ENCODE measurements at regions of chr7 and their contacts with region 1.

Region 1: DNA sequence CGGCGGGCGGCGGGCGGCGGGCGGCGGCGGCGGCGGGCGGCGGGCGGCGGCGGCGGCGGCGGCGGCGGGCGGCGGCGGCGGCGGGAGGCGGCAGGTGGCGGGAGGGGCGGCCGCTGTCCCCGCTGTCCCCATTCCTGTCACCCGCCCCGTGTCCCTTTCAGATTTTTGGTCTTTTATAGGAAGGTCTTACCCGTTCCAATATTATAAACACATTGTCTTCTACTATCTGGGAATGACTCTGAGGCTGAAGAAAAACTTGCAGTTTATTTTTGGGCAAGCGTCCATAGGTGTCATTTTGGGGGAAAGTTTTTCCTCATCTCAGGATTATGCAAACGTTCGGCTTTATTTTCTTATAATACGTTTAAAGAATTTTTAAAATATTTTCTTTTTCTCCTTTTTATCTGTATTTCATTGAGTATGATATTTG is 578 bp downstream of the ZNF713 start:
- DNase-seq: peak in 1 of 14 experiments; percentile 1
- ATAC-seq: peak; percentile 12
- H3K4me3 ChIP-seq: peak overlapping the region; percentile 60
- H3K4me3 Mint-ChIP-seq: peak overlapping the region; percentile 90
- H3K27ac ChIP-seq: no peak overlapping the region
- H3K27ac Mint-ChIP-seq: peak overlapping the region; percentile 90
- H3K4me1 ChIP-seq: peaks cover 13% of the 10 kb centered on the region
- H3K4me1 Mint-ChIP-seq: peaks cover 6% of the 10 kb centered on the region
- H3K27me3 ChIP-seq: no peaks in the 10 kb centered on the region
- H3K27me3 Mint-ChIP-seq: no peaks in the 10 kb centered on the region
- CTCF ChIP-seq: no peak

Region 2: DNA sequence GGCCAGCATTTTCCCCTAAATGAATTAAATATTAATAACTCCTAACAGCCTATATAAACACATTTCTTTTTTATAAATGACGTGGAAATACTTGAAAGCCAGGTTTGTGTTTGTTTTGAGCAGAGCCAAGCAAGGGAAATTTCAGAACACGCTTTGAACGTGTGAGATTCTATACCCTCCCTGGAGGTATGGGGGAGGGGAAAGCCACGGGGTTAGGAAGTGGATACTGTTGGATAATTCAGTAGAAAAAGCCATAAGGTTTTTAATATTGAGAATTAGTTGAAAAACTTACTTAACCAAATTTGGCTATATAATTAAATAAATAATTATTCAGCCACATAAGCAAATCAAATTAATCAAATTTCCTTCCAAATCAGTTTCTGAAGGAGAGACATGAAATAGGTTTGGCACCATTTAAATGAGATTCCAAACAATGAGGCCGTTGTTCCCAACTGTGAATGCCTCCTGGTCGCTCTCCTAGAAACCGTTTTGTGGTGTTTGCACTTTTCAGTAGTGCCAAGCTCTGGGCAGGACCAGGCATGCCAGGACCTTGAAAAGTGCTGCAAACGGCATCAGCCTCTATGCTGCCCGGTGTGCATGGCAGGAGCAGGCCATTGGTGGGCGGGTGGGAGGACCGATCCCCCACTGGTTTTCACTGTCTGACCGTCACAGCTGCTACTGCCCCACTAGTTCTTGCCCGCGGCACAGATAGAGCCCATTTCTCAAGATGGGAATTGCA is 113.3 kb before region 1 on chr7:
- CTCF ChIA-PET with region 1: no interaction called
- POLR2A ChIA-PET with region 1: no interaction called
- intact Hi-C with region 1: loop called in 1 of 2 experiments (anchors 10 kb)
- DNase-seq: no peak
- ATAC-seq: no peak
- H3K4me3 ChIP-seq: no peak overlapping the region
- H3K4me3 Mint-ChIP-seq: no peak overlapping the region
- H3K27ac ChIP-seq: no peak overlapping the region
- H3K27ac Mint-ChIP-seq: no peak overlapping the region
- H3K4me1 ChIP-seq: no peaks in the 10 kb centered on the region
- H3K4me1 Mint-ChIP-seq: no peaks in the 10 kb centered on the region
- H3K27me3 ChIP-seq: no peaks in the 10 kb centered on the region
- H3K27me3 Mint-ChIP-seq: no peaks in the 10 kb centered on the region
- CTCF ChIP-seq: no peak

Region 3: GRCh38 chr7:55912748-55913158 is 24.9 kb after region 1 on chr7:
- CTCF ChIA-PET with region 1: no interaction called
- POLR2A ChIA-PET with region 1: no interaction called
- intact Hi-C with region 1: no loop called
- DNase-seq: no peak
- ATAC-seq: no peak
- H3K4me3 ChIP-seq: no peak overlapping the region
- H3K4me3 Mint-ChIP-seq: no peak overlapping the region
- H3K27ac ChIP-seq: no peak overlapping the region
- H3K27ac Mint-ChIP-seq: no peak overlapping the region
- H3K4me1 ChIP-seq: no peaks in the 10 kb centered on the region
- H3K4me1 Mint-ChIP-seq: no peaks in the 10 kb centered on the region
- H3K27me3 ChIP-seq: no peaks in the 10 kb centered on the region
- H3K27me3 Mint-ChIP-seq: no peaks in the 10 kb centered on the region
- CTCF ChIP-seq: no peak

Region 4: GRCh38 chr7:55951637-55952351 is 64.0 kb after region 1 on chr7 and contains the start of gene MRPS17:
- CTCF ChIA-PET with region 1: no interaction called
- POLR2A ChIA-PET with region 1: no interaction called
- intact Hi-C with region 1: loop called (anchors 1 to 2 kb)
- DNase-seq: peak; percentile 82 to 97 (median 91)
- ATAC-seq: peak; percentile 99
- H3K4me3 ChIP-seq: peak within 1 kb of the TSS; percentile 96
- H3K4me3 Mint-ChIP-seq: peak within 1 kb of the TSS; percentile 94
- H3K27ac ChIP-seq: peak within 1 kb of the TSS; percentile 76 to 89
- H3K27ac Mint-ChIP-seq: peak within 1 kb of the TSS; percentile 92
- H3K4me1 ChIP-seq: peaks cover 13% of the 10 kb centered on the region
- H3K4me1 Mint-ChIP-seq: peaks cover 26% of the 10 kb centered on the region
- H3K27me3 ChIP-seq: no peaks in the 10 kb centered on the region
- H3K27me3 Mint-ChIP-seq: no peaks in the 10 kb centered on the region
- CTCF ChIP-seq: no peak
- total RNA-seq, gene MRPS17: 6.7 to 6.9 TPM

Region 5: DNA sequence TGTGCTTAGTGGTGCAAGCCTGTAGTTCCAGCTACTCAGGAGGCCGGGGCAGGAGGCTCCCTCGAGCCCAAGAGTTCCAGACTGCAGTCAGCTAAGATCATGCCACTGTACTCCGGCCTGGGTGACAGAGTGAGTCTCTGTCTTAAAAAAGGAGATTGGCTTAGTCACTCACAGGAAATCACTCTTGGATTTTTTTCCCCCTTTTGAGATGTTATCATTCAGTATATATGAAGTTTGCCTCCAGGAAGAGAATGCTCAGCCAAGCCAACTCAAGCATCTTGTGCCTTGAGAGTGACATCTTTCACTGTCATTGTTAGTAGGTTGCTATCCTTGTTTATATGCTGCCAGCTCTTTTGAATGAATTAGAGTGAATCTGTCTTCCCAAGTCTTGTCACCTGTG is 104.5 kb after region 1 on chr7:
- CTCF ChIA-PET with region 1: no interaction called
- POLR2A ChIA-PET with region 1: no interaction called
- intact Hi-C with region 1: no loop called
- DNase-seq: no peak
- ATAC-seq: no peak
- H3K4me3 ChIP-seq: no peak overlapping the region
- H3K4me3 Mint-ChIP-seq: no peak overlapping the region
- H3K27ac ChIP-seq: no peak overlapping the region
- H3K27ac Mint-ChIP-seq: no peak overlapping the region
- H3K4me1 ChIP-seq: no peaks in the 10 kb centered on the region
- H3K4me1 Mint-ChIP-seq: no peaks in the 10 kb centered on the region
- H3K27me3 ChIP-seq: no peaks in the 10 kb centered on the region
- H3K27me3 Mint-ChIP-seq: no peaks in the 10 kb centered on the region
- CTCF ChIP-seq: no peak

Region 6: DNA sequence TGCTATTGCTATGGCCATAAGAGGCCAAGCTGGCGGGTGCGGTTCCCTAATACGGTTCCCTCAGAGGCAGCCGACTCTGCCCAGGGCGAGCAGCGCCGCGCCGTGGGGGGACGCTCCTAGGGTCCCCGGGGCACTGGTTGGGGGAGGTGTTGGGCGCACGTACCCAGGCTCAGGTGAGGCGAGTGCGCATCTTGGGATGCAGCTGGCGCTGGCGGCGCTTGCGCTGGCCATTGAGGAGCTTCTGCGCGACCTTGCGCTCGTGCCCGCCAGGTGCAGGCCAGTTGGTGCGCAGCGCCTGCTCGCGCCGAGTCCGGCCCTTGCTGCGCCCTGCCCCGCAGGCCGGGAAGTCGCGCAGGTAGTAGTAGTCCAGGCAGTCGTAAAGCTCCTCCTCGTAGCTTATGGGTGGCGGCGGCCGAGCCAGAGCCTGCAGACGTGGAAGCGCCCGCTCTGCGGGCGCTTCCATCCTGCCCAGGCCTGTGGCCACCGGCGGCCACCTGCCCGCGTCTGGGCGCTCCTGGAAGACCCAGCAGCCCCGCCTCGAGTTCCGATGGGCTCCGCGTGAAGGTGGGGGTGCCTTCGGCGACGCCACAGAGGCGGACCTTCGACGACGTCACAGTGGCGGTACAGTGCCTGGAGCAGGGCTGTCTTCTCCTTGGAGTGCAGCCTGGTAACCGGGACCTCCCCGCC is 228.2 kb after region 1 on chr7 and contains the start of gene NUPR2:
- CTCF ChIA-PET with region 1: no interaction called
- POLR2A ChIA-PET with region 1: no interaction called
- intact Hi-C with region 1: no loop called
- DNase-seq: no peak
- ATAC-seq: no peak
- H3K4me3 ChIP-seq: peak within 1 kb of the TSS; percentile 5
- H3K4me3 Mint-ChIP-seq: no peak within 1 kb of the TSS
- H3K27ac ChIP-seq: no peak within 1 kb of the TSS
- H3K27ac Mint-ChIP-seq: no peak within 1 kb of the TSS
- H3K4me1 ChIP-seq: no peaks in the 10 kb centered on the region
- H3K4me1 Mint-ChIP-seq: no peaks in the 10 kb centered on the region
- H3K27me3 ChIP-seq: peaks cover 13 to 21% of the 10 kb centered on the region in 2 experiments
- H3K27me3 Mint-ChIP-seq: peaks cover 27% of the 10 kb centered on the region
- CTCF ChIP-seq: no peak
- total RNA-seq, gene NUPR2: not detected